Activated CD8-positive, alpha-beta memory T cell treated with anti-CD3 and anti-CD28 coated beads, Interleukin-2, amount 10 ng/mL, durations not matched to agents 7 days and 5 days (primary cell): ENCODE measurements at regions of chr15 and their contacts with region 1.

Region 1: DNA sequence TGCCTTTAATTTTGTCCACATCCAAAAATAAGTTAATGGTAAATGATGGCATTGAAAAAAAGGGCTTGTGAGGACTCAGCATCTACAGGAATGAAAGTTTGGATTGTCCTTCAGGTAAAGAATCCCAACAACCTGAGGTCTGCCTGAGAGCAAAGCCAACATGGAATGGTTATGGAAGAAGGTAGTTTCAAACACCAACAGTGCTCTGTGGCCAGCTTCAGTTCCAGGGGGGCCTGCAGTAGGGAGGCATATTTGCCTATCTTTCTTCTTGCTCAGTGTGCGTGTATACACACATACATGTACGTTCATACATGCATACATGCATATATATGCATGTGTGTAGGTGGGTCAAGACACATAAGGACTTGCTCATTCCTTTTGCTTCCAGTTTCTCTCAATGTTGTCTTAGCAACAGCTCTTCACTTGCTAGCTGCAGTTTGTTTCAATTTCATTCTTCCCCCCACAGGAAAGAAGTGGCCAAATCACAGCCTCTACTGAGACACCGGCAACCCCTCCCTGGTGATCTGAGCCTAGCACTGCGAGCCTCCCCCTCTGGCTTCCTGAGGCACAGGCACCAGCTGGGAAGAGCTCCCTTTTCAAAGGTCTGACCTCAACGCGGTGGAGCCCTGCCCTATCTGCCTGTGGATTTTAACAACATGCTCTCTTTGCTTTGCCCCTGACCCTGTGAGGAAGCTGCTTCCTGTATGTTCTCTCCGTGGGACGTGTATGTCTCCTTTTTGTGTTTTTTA is 146.2 kb downstream of the KLF13 start:
- DNase-seq: peak; percentile 80
- ATAC-seq: peak; percentile 94
- H3K4me3 Mint-ChIP-seq: peak overlapping the region; percentile 69
- H3K27ac Mint-ChIP-seq: peak overlapping the region; percentile 93
- H3K4me1 Mint-ChIP-seq: peaks cover 38% of the 10 kb centered on the region
- H3K27me3 Mint-ChIP-seq: no peaks in the 10 kb centered on the region

Region 2: DNA sequence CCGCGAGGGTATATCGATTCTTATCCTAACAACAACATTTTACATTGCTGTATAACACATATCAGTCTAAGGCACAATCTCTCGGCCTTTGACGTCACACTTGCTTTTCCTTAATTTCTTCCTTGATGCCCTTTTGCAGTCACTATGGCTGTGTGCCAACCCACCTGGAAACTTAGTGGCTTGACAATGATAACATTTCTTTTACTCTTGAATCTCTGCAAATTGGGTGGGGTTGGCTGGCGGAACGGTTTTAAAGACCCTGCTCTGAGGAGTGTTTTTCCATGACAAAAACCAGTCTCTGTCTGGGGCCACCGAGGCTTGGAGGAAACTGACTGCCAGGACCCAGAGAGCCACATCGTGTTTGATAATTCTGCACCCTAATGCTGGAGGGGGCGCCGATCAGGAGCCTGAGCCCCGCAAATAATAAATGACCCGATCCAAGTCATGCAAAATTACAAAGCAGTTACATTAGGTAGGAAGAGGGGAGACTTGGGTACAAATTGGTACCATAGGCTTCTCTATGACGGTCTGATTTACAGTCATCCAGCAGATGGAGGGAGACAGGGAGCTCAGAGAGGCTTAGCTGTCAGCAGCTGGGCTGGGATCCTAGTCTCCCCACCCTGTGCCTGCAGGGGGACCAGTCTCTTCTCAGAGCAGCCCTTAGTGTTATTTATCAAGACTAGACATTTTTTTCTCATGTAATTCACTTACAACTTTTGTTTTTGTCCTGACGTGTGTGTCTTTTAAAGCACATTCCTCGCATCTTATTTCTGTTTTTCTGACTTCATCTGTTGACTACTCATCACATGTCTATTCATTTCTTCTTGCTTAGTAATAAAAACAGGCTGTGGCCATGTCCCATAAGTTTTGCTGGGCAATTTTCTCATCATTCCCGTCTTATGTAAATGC is 30.4 kb before region 1 on chr15:
- CTCF ChIA-PET with region 1: interaction called, 33 read pairs
- DNase-seq: no peak
- ATAC-seq: no peak
- H3K4me3 Mint-ChIP-seq: peak overlapping the region; percentile 5
- H3K27ac Mint-ChIP-seq: peak overlapping the region; percentile 29
- H3K4me1 Mint-ChIP-seq: peaks cover 62% of the 10 kb centered on the region
- H3K27me3 Mint-ChIP-seq: no peaks in the 10 kb centered on the region

Region 3: GRCh38 chr15:31458591-31459399 is 14.0 kb before region 1 on chr15:
- CTCF ChIA-PET with region 1: interaction called, 10 read pairs
- DNase-seq: no peak
- ATAC-seq: peak; percentile 33
- H3K4me3 Mint-ChIP-seq: no peak overlapping the region
- H3K27ac Mint-ChIP-seq: no peak overlapping the region
- H3K4me1 Mint-ChIP-seq: peaks cover 25% of the 10 kb centered on the region
- H3K27me3 Mint-ChIP-seq: no peaks in the 10 kb centered on the region

Region 4: DNA sequence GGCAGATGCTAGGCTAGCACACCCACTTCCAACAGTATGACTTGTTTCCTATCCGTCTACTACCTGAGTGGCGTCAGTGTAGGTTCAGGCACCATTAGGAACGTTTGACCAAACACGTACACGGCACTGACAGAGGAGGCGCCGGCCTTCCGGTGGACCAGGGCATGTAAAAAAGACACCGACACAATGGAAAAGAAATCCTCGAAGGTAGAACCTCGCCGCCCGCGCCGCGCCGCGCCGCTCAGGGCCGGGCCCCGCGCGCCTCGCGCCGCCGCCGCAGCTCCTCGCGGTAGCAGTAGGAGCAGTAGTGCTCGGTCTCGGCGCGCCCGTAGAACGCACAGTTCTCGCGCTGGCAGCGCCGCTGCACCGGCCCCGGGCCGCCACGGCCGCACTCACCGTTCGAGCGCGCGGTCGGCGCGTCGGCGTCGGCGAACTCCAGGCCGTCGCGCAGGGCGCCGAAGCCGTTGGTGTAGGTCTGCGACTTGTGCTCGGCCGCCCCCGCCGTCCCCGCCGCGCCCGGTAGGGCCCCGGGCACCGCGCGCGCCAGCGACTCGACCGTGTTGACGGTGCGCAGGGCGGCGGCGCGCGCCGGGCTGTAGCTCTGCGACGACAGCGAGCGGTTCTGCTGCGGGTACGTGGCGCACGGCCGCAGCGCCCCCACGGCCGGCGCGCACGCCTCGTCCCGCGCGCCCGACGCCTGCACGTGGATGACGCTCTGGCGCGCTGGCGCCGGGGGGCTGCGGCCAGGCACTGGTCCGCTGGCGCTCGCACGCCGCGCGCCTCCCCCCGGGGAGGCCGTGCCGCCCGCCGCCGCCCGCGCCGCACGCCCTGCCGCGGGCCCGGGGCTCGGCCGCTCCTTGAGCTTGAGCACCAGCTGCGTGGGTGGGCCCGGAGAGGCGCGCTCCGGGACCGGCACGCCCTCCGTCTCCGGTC is 10.5 kb after region 1 on chr15:
- CTCF ChIA-PET with region 1: interaction called, 65 read pairs
- DNase-seq: peak; percentile 79
- ATAC-seq: peak; percentile 72
- H3K4me3 Mint-ChIP-seq: peak overlapping the region; percentile 89
- H3K27ac Mint-ChIP-seq: peak overlapping the region; percentile 96
- H3K4me1 Mint-ChIP-seq: peaks cover 71% of the 10 kb centered on the region
- H3K27me3 Mint-ChIP-seq: no peaks in the 10 kb centered on the region